Breast epithelium (tissue), 4 donors: ENCODE measurements at regions of chr1 and their contacts with region 1.

Region 1: GRCh38 chr1:3939242-3940080 is 39.4 kb upstream of the C1orf174 start:
- DNase-seq: no peak
- H3K4me3 ChIP-seq: no peak overlapping the region
- H3K27ac ChIP-seq: no peak overlapping the region
- H3K4me1 ChIP-seq: no peaks in the 10 kb centered on the region
- H3K27me3 ChIP-seq: peaks cover 0 to 46% of the 10 kb centered on the region in 2 donors
- CTCF ChIP-seq: no peak
- POLR2A ChIP-seq: no peak

Region 2: DNA sequence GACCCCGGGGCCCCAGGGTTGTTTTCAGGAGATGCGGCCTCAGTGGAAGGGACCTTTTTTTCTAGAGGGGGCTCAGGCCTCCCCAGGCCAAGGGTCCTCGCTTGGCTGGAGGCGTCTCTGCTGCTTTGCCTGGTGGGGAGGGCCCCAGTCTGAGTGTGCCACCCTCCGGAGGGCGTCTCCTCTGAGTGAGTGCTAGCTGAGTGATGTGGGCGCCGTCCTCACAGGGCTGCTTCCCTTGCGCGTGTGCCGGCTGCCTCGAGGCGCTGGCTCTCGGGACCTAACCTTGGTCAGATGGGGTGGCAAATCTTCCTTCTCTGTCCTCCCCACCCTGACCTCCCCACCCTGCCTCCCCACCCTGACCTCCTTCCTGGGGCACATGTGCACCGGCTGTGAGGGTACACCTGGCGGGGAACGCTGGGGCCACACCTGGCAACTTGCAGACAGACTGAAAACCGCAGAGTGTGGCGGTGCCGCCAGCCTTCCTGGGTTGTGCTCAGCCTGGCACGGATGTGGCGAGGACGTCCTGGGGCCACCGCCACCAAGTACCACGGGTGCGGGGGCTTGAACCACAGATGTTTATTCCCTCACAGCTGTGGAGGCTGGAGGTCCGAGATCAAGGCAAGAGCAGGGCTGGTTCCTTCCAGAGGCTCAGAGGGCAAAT is 1045.0 kb before region 1 on chr1:
- intact Hi-C with region 1: no loop called
- DNase-seq: no peak
- H3K4me3 ChIP-seq: no peak overlapping the region
- H3K27ac ChIP-seq: no peak overlapping the region
- H3K4me1 ChIP-seq: no peaks in the 10 kb centered on the region
- H3K27me3 ChIP-seq: peaks cover 0 to 59% of the 10 kb centered on the region in 2 donors
- CTCF ChIP-seq: no peak
- POLR2A ChIP-seq: no peak

Region 3: DNA sequence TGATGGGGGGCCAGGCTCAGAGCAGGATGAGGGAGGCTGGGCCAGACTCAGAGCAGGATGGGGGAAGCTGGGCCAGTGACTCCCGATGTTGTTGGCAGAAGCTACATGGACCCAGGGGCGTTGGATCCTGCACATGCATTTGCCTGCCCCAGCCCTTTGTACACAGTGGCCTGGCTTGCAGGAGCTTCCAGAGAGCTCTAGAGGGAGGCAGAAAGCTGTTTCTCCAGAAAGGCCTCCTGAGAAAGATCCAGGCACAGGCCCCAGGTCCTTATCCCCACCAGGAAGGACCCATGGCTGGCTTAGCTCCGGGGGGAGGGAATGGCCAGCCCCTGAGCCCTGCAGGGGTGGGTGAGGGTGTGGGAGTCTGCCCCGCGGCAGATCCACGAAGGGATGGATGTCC is 1024.8 kb before region 1 on chr1:
- intact Hi-C with region 1: loop called (anchors 5 kb)
- DNase-seq: no peak
- H3K4me3 ChIP-seq: no peak overlapping the region
- H3K27ac ChIP-seq: no peak overlapping the region
- H3K4me1 ChIP-seq: no peaks in the 10 kb centered on the region
- H3K27me3 ChIP-seq: peaks cover 0 to 43% of the 10 kb centered on the region in 2 donors
- CTCF ChIP-seq: no peak
- POLR2A ChIP-seq: no peak